ENCODE measurements at regions of chr16 and their contacts with region 1.

Region 1: GRCh38 chr16:22677024-22677830 is 136.7 kb upstream of the HS3ST2 start:
- DNase-seq: no peak
- ATAC-seq: no peak
- H3K4me3 ChIP-seq: no peak overlapping the region
- H3K27ac ChIP-seq: no peak overlapping the region
- H3K4me1 ChIP-seq: no peaks in the 10 kb centered on the region
- H3K27me3 ChIP-seq: no peaks in the 10 kb centered on the region

Region 2: GRCh38 chr16:22035153-22035552 is 642.1 kb before region 1 on chr16:
- intact Hi-C with region 1: no loop called
- DNase-seq: no peak
- ATAC-seq: no peak
- H3K4me3 ChIP-seq: no peak overlapping the region
- H3K27ac ChIP-seq: no peak overlapping the region
- H3K4me1 ChIP-seq: peaks cover 0 to 2% of the 10 kb centered on the region in 2 donors
- H3K27me3 ChIP-seq: no peaks in the 10 kb centered on the region

Region 3: GRCh38 chr16:22948603-22949368 is 271.6 kb after region 1 on chr16:
- intact Hi-C with region 1: loop called (anchors 2 kb)
- DNase-seq: peak; percentile 68 to 85
- ATAC-seq: peak; percentile 84
- H3K4me3 ChIP-seq: no peak overlapping the region
- H3K27ac ChIP-seq: no peak overlapping the region
- H3K4me1 ChIP-seq: no peaks in the 10 kb centered on the region
- H3K27me3 ChIP-seq: no peaks in the 10 kb centered on the region

Region 4: GRCh38 chr16:22955461-22956070 is 278.3 kb after region 1 on chr16:
- intact Hi-C with region 1: loop called in 1 of 2 experiments (anchors 2 kb)
- DNase-seq: no peak
- ATAC-seq: no peak
- H3K4me3 ChIP-seq: no peak overlapping the region
- H3K27ac ChIP-seq: no peak overlapping the region
- H3K4me1 ChIP-seq: no peaks in the 10 kb centered on the region
- H3K27me3 ChIP-seq: no peaks in the 10 kb centered on the region